T-cell (primary cell): ENCODE measurements at regions of chr14 and their contacts with region 1.

Region 1: DNA sequence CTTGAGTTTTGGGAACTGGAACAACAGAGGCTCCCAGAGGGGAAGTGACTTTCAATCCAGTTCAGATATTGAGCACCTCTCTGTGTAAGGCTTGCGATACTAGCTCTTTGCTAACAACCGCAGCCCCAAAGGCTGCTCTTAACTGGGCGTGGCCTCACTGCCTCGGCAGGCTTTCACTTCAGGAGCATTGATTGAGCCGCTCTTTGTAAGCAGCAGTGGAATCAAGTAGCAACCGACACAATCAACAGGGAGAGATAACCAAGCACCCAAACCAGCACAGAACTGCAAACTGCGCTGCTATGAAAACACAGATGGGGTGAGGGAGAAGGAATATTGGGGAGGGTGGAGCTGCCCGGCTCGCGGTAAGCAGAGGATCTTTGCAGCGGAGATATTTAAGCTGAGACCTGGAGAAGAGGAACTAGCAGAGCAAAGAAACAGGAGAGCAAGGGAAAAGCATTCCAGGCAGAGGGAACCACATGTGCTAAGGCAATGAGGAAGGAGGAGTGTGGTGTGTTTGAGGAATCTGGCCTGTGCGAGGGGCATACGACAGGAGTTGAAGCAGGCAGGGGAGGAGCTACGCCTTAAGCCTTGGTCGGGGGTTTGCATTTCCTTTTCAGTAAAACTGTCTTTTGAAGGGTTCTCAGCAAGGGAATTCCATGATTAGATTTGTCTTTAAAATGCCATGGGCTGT is 17.3 kb upstream of the YY1 start:
- DNase-seq: peak; percentile 39 to 83 (median 65)
- ATAC-seq: peak; percentile 91 to 95 (median 92)
- H3K4me3 ChIP-seq: peak overlapping the region; percentile 66 to 86
- H3K4me3 Mint-ChIP-seq: no peak overlapping the region
- H3K27ac ChIP-seq: peak overlapping the region; percentile 71
- H3K27ac Mint-ChIP-seq: no peak overlapping the region
- H3K4me1 ChIP-seq: peaks cover 32 to 51% of the 10 kb centered on the region in 2 experiments
- H3K4me1 Mint-ChIP-seq: peaks cover 7 to 23% (median 8%) of the 10 kb centered on the region in 3 donors
- H3K27me3 ChIP-seq: no peaks in the 10 kb centered on the region
- H3K27me3 Mint-ChIP-seq: no peaks in the 10 kb centered on the region

Region 2: DNA sequence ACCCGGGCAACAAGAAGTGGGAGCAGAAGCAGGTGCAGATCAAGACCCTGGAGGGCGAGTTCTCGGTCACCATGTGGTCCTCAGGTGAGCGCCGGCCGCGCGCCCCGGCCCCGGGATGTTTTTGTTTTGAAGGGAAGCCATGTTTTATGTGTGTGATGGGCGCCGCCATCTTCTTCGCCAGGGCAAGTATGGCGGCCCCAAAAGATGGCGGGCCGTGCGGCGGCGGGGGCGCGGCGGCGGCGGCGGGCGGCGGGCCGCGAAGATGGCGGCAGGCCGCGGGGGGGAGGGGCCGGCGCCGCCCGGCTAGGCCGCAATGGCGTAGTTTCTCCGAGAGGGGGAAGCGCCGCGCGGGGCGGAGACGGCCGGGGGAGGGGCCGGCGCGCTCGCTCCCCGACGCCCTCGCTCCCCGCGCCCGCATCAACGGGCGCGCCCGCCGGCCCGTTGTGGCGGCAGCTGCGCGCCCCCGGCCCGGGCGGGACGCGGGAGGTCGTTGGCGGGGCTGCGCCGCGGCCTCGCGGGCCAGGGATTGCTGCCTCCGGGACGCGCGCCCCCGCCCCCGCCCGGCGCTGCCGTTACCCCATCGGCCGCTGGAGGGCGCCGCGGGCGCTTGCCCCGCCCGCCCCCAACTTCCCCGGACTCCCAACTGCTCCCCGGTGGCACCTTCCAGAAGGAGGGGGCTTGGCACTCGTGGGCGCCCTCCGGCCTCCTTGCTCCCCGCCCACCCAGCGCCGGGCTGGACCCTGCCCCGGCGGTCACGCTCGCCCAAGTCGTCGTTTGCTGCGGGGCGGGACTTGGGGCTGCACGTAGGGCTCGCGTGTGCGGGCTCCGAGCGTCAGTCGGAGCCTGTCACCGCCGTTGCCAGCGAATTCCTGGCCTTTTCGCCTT is 18.4 kb after region 1 on chr14:
- CTCF ChIA-PET with region 1: interaction called in 1 of 2 experiments, 14 read pairs
- POLR2A ChIA-PET with region 1: interaction called, 9 to 10 read pairs
- DNase-seq: peak; percentile 74 to 94 (median 83)
- ATAC-seq: peak; percentile 52 to 56 (median 54)
- H3K4me3 ChIP-seq: peak overlapping the region; percentile 79 to 86
- H3K4me3 Mint-ChIP-seq: peak overlapping the region; percentile 88 to 97 (median 92)
- H3K27ac ChIP-seq: peak overlapping the region; percentile 76
- H3K27ac Mint-ChIP-seq: peak overlapping the region; percentile 92 to 95
- H3K4me1 ChIP-seq: peaks cover 25 to 49% of the 10 kb centered on the region in 2 experiments
- H3K4me1 Mint-ChIP-seq: peaks cover 59 to 64% (median 64%) of the 10 kb centered on the region in 3 donors
- H3K27me3 ChIP-seq: no peaks in the 10 kb centered on the region
- H3K27me3 Mint-ChIP-seq: no peaks in the 10 kb centered on the region